BJ (cell line): ENCODE measurements at regions of chr1 and their contacts with region 1.

Region 1: GRCh38 chr1:32939655-32940371 is 24.8 kb downstream of the RNF19B start:
- DNase-seq: peak; percentile 78
- H3K4me3 ChIP-seq: no peak overlapping the region
- H3K27me3 ChIP-seq: no peaks in the 10 kb centered on the region
- CTCF ChIP-seq: no peak

Region 2: DNA sequence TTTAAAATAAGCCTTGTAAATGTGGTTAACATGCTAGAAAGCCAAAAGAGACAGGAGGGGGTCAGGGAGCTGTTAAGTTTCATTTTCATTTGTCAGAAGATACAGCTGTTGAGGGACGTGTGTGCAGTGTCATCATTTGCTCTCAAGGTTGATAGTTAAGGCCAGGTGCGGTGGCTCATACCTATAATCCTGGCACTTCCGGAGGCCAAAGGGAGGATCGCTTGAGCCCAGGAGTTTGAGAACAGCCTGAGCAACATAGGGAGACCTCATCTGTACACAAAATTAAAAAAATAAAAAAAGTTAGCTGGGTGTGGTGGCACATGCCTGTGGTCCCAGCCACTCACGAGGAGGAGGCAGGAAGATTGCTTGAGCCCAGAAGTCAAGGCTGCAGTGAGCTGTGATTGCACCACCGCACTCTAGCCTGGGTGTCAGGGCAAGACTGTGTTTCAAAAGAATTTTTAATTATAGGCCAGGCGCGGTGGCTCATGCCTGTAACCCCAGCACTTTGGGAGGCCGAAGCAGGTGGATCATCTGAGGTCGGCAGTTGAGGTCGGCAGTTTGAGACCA is 312.1 kb before region 1 on chr1:
- CTCF ChIA-PET with region 1: no interaction called
- POLR2A ChIA-PET with region 1: interaction called, 16 read pairs
- DNase-seq: no peak
- H3K4me3 ChIP-seq: no peak overlapping the region
- H3K27me3 ChIP-seq: no peaks in the 10 kb centered on the region
- CTCF ChIP-seq: no peak

Region 3: DNA sequence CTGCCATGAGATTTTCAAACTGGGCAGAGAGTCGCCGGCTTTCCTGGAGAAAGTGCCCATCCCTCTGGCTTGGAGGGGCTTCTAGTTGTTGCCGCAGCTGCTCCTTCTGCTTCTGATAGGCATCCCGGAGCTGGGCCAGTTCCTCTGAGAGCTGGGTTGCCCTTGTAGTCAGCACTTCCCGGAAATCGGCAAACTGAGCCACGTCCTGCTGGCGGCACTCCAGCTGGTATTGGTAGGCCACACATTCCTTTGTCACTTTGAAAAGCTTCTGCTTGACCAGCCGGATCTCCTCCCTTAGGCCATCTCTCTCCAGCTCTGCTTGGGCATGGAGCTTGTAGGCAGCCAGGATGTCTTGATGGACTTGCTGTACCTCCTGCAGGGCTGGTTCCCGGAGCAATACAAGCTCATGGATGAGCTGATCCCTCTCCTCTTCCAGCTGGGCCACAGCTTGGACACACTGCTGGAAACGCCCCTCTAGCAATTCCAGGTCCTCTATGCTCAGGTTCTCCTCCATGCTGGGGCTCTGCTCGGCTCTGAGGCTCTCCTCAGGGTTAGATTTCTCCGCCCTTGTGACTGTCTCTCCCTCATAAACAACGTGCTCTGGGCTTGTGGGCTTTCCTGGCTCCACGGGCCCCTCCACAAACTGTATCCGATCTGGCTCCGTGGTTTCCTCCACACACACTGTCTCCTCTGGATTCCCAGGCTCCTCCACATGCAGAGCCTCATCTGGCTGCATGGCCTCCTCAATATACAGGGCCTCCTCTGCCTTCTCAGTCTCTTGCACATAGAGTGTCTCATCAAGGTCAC is 244.5 kb before region 1 on chr1:
- CTCF ChIA-PET with region 1: no interaction called
- POLR2A ChIA-PET with region 1: no interaction called
- DNase-seq: no peak
- H3K4me3 ChIP-seq: no peak overlapping the region
- H3K27me3 ChIP-seq: no peaks in the 10 kb centered on the region
- CTCF ChIP-seq: no peak

Region 4: GRCh38 chr1:32964461-32965250 is 24.8 kb after region 1 on chr1 and contains the start of gene RNF19B:
- CTCF ChIA-PET with region 1: interaction called, 10 read pairs
- POLR2A ChIA-PET with region 1: no interaction called
- DNase-seq: peak; percentile 63
- H3K4me3 ChIP-seq: peak within 1 kb of the TSS; percentile 87
- H3K27me3 ChIP-seq: no peaks in the 10 kb centered on the region
- CTCF ChIP-seq: no peak
- polyA plus RNA-seq, gene RNF19B: 7.7 and 8.2 TPM in 2 replicates

Region 5: GRCh38 chr1:33147997-33148314 is 208.1 kb after region 1 on chr1:
- CTCF ChIA-PET with region 1: no interaction called
- POLR2A ChIA-PET with region 1: no interaction called
- DNase-seq: no peak
- H3K4me3 ChIP-seq: no peak overlapping the region
- H3K27me3 ChIP-seq: no peaks in the 10 kb centered on the region
- CTCF ChIP-seq: peak; percentile 52